ENCODE measurements at regions of chr18 and their contacts with region 1.

Region 1: DNA sequence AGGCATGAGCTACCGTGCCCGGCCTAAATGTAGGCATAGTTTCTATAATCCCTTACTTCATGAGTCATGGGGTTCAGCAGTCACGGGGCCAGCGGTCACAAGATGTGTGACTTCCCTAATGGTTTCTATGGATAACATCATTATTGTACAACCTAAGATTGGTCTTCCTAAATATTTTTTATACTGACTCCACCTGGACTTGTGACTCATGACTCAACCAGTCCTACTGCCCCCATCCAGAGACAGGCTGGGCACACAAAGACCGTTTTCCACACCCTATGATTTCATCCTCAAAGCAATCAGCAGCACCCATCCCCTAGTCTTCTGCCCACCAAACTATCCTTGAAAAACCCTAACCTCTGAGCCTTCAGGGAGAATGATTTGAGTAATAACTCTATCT is 15.9 kb downstream of the FAM210A start:
- DNase-seq: no peak
- ATAC-seq: no peak
- H3K4me3 Mint-ChIP-seq: no peak overlapping the region
- H3K27ac Mint-ChIP-seq: no peak overlapping the region
- H3K4me1 Mint-ChIP-seq: peaks cover 8% of the 10 kb centered on the region
- H3K27me3 Mint-ChIP-seq: no peaks in the 10 kb centered on the region
- CTCF ChIP-seq: no peak

Region 2: GRCh38 chr18:13011719-13012118 is 698.7 kb before region 1 on chr18:
- CTCF ChIA-PET with region 1: no interaction called
- POLR2A ChIA-PET with region 1: no interaction called
- intact Hi-C with region 1: no loop called
- DNase-seq: no peak
- ATAC-seq: no peak
- H3K4me3 Mint-ChIP-seq: no peak overlapping the region
- H3K27ac Mint-ChIP-seq: no peak overlapping the region
- H3K4me1 Mint-ChIP-seq: peaks cover 1% of the 10 kb centered on the region
- H3K27me3 Mint-ChIP-seq: no peaks in the 10 kb centered on the region
- CTCF ChIP-seq: no peak

Region 3: GRCh38 chr18:13660510-13660909 is 50.0 kb before region 1 on chr18:
- CTCF ChIA-PET with region 1: no interaction called
- POLR2A ChIA-PET with region 1: no interaction called
- intact Hi-C with region 1: loop called (anchors 10 kb)
- DNase-seq: no peak
- ATAC-seq: no peak
- H3K4me3 Mint-ChIP-seq: no peak overlapping the region
- H3K27ac Mint-ChIP-seq: no peak overlapping the region
- H3K4me1 Mint-ChIP-seq: peaks cover 12% of the 10 kb centered on the region
- H3K27me3 Mint-ChIP-seq: no peaks in the 10 kb centered on the region
- CTCF ChIP-seq: no peak